ENCODE measurements at regions of chr5 and their contacts with region 1.

Region 1: GRCh38 chr5:139560752-139561654 is at the start of gene UBE2D2:
- DNase-seq: peak; percentile 93 to 96
- ATAC-seq: peak; percentile 84
- H3K4me3 ChIP-seq: peak within 1 kb of the TSS; percentile 77 to 94 (median 88)
- H3K27ac ChIP-seq: peak within 1 kb of the TSS; percentile 92 to 99 (median 97)
- H3K4me1 ChIP-seq: peaks cover 41 to 42% of the 10 kb centered on the region in 2 donors
- H3K27me3 ChIP-seq: no peaks in the 10 kb centered on the region
- CTCF ChIP-seq: peak in 1 of 5 experiments; percentile 9
- POLR2A ChIP-seq: peak; percentile 91 to 93
- total RNA-seq, gene UBE2D2: 98.5 to 199 (median 131) TPM

Region 2: DNA sequence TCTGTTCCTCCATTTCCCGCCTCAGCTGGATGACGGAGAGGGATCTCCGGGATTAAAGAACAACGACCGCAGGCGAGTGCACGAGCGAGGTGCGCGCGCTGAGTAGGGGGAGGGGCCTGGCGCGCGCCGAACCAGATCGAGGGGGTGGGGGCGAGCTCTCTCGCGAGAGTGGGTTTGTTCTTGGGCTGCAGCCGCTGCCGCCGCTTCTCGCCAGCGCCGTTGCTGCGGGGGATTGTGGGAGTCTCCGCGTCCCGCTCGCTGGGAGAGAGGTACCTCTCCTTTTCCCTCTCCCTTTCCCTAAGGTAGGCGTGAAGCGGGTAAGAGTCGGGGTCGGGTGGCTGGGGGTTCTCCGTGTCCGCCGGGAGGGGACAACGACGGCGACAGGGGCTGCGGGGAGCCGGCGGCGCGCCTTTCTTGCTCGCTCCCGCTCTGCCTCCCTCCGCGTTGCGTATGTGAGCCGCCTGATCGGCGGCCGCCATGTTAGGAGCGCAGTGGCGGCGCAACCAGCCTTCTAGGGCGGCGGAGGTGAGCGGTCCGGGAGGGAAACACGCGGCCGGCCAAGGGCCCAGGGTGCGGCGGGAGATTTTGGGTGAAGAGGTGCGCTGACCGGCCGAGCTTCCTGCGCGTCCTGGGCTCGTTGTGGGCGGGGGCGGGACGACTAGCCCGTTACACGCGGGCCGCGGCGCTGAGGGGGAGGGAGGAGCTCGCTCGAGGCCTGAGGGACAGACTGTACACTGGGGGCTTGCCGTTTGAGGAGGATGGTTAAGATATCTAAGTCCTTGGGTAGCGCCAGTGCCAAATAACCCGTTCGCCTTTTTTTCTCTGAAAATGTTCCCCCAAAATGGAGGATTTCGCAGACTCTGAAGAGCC is 267.3 kb before region 1 on chr5 and contains the start of gene MATR3:
- in situ Hi-C with region 1: no loop called
- intact Hi-C with region 1: loop called (anchors 5 kb)
- DNase-seq: peak; percentile 92 to 96
- ATAC-seq: peak; percentile 86 to 90
- H3K4me3 ChIP-seq: peak within 1 kb of the TSS; percentile 82 to 97 (median 86)
- H3K27ac ChIP-seq: peak within 1 kb of the TSS; percentile 93 to 100 (median 99)
- H3K4me1 ChIP-seq: peaks cover 42 to 43% of the 10 kb centered on the region in 2 donors
- H3K27me3 ChIP-seq: no peaks in the 10 kb centered on the region
- CTCF ChIP-seq: no peak
- POLR2A ChIP-seq: peak; percentile 98 to 99
- total RNA-seq, gene MATR3: 115 to 188 (median 156) TPM

Region 3: GRCh38 chr5:139417214-139417613 is 143.8 kb before region 1 on chr5:
- in situ Hi-C with region 1: no loop called
- intact Hi-C with region 1: loop called (anchors 5 kb)
- DNase-seq: peak; percentile 64 to 79
- ATAC-seq: peak; percentile 69 to 79
- H3K4me3 ChIP-seq: no peak overlapping the region
- H3K27ac ChIP-seq: peak overlapping the region; percentile 83 to 90 (median 87)
- H3K4me1 ChIP-seq: peaks cover 58 to 61% of the 10 kb centered on the region in 2 donors
- H3K27me3 ChIP-seq: no peaks in the 10 kb centered on the region
- CTCF ChIP-seq: no peak
- POLR2A ChIP-seq: no peak

Region 4: DNA sequence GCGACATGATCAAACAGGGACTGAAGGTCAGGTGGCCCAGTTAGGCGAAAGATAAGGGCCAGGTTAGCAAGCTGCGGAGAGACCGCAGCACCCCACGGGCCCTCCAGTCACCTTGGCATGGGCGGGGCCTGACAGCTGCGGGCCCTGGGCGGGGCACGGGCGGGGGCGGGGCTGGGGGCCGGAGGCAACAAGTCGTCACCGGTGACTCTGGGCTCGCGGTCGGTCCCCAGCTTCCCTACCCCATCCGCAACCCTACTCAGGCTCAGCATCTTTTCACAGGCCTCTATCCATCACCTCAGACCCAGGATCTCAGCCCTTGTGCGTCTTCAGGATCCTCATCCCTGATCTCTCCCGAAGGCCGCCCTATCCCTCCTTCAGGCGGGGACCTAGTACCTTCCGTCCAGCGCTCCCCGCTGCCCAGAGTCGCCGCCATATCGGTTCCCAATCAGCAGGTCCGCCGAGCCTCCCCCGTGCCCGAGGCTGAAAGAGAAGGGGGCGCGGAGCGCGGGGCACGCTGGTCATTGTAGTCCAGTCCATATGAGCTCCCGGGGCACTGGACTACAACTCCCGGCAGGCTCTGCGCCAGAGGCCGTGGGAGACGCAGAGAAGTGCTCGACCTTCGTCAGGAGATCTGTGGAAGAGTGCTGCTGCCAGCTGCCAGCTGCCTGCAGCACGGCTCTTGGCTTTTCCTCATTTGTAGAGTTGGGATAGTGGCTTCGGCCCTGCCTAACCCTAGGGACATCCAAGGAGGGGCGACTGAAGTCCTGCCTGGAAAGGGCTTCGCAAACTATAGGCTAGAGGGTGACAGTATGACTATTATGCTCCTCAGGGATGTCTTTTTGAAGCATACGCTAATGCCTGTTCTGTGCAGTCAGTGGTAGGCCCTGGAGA is 121.7 kb before region 1 on chr5 and contains the start of gene DNAJC18:
- in situ Hi-C with region 1: no loop called
- intact Hi-C with region 1: loop called (anchors 5 kb)
- DNase-seq: peak; percentile 94
- ATAC-seq: peak; percentile 98
- H3K4me3 ChIP-seq: peak within 1 kb of the TSS; percentile 90 to 97 (median 94)
- H3K27ac ChIP-seq: peak within 1 kb of the TSS; percentile 98 to 100 (median 99)
- H3K4me1 ChIP-seq: peaks cover 5 to 16% of the 10 kb centered on the region in 2 donors
- H3K27me3 ChIP-seq: no peaks in the 10 kb centered on the region
- CTCF ChIP-seq: no peak
- POLR2A ChIP-seq: peak; percentile 41 to 51
- total RNA-seq, gene DNAJC18: 5.1 to 21.7 (median 13.3) TPM

Region 5: GRCh38 chr5:139492700-139493192 is 68.3 kb before region 1 on chr5:
- in situ Hi-C with region 1: no loop called
- intact Hi-C with region 1: no loop called
- DNase-seq: no peak
- ATAC-seq: peak; percentile 62 to 66
- H3K4me3 ChIP-seq: no peak overlapping the region
- H3K27ac ChIP-seq: peak overlapping the region in 1 of 4 donors; percentile 43
- H3K4me1 ChIP-seq: peaks cover 0 to 7% of the 10 kb centered on the region in 2 donors
- H3K27me3 ChIP-seq: no peaks in the 10 kb centered on the region
- CTCF ChIP-seq: no peak
- POLR2A ChIP-seq: no peak

Region 6: DNA sequence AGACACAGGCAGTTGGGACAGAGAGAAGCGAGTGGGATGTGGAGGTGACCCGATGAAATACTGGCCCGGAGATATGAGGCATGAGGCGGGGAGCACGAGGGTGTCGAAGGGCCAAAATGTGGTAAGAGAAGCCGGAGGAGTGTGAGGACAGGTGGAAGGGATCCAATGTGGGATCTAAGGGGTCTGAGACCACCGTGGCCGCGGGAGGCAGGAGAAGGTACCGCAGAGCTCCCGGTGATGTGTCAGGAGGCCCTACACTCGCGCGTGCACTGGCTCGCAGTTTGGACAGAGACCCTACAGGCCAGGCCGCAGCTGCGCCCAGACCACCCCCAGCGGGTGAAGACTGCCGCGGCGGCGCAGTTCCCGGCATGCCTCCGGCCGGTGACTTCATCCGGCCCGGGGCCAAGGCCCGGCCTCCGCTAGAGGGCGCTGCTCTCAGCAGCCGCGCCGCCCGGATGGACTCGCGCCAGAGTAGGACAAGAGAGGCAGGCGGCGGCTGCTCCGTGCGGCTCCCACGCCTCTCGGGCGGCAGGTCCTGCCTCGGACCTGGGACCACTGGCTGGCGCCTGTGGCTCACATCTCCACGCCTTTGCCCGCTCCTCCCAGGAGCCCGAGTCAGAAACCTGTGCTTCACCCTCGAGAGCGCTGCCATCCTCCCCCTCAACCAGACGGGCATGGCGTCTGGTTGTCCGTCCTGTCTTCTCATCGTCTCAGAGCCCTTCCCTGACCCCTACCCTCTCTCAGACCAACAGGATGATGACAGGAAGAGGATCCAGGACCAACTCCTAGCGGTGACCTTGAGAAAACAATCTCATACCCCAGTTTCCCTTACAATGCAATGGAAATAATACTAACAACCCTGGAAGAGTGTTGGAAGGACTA is 43.1 kb before region 1 on chr5:
- in situ Hi-C with region 1: no loop called
- intact Hi-C with region 1: loop called (anchors 2 kb)
- DNase-seq: peak; percentile 78 to 88
- ATAC-seq: peak; percentile 82 to 90
- H3K4me3 ChIP-seq: peak overlapping the region; percentile 58 to 79 (median 63)
- H3K27ac ChIP-seq: peak overlapping the region; percentile 83 to 95 (median 90)
- H3K4me1 ChIP-seq: peaks cover 7 to 8% of the 10 kb centered on the region in 2 donors
- H3K27me3 ChIP-seq: no peaks in the 10 kb centered on the region
- CTCF ChIP-seq: peak in 4 of 5 experiments; percentile 93 to 99 (median 98)
- POLR2A ChIP-seq: peak; percentile 36 to 54

Region 7: GRCh38 chr5:139600336-139600949 is 39.4 kb after region 1 on chr5:
- in situ Hi-C with region 1: no loop called
- intact Hi-C with region 1: loop called (anchors 2 kb)
- DNase-seq: no peak
- ATAC-seq: no peak
- H3K4me3 ChIP-seq: no peak overlapping the region
- H3K27ac ChIP-seq: peak overlapping the region; percentile 81 to 89 (median 87)
- H3K4me1 ChIP-seq: peaks cover 18 to 22% of the 10 kb centered on the region in 2 donors
- H3K27me3 ChIP-seq: no peaks in the 10 kb centered on the region
- CTCF ChIP-seq: no peak
- POLR2A ChIP-seq: no peak